ENCODE measurements at regions of chr17 and their contacts with region 1.

Region 1: GRCh38 chr17:48618256-48618897 is 3.3 kb upstream of the HOXB8 start:
- DNase-seq: peak; percentile 77
- H3K4me3 ChIP-seq: no peak overlapping the region
- H3K27ac ChIP-seq: no peak overlapping the region
- H3K4me1 ChIP-seq: peaks cover 4% of the 10 kb centered on the region
- H3K27me3 ChIP-seq: peaks cover 87% of the 10 kb centered on the region
- CTCF ChIP-seq: peak; percentile 87 to 92

Region 2: DNA sequence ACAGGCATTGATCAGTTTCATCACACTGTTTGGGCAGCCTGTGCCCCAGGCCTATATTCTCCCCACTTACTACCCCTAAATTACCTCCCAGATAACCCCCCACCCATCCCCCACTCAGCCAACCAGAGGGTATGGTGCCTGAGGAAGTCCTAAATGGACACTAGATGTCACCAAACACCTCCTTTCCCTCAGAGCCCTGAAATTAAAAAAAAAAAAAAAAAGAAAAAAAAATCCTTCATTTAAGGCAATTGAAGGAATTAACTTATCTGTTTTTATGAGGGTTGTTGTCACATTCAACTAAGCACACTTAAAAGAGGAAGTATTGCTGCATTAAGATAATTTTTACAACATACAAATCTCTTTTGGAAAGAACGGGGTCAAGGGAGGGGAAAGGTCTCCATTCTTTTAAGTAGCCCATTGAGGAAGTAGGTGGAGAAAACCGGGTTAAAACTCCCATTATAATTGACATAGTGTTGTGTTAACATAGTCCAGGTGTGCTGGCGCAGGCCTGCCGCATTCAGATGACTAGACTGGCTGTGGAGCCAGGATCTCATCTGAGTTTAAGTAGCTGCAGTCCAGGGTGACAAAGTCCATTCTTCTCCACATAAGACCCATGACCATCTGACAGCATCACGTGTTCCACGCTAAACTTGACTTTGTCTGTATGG is 464.6 kb before region 1 on chr17:
- CTCF ChIA-PET with region 1: no interaction called
- dilution Hi-C with region 1: no loop called
- in situ Hi-C with region 1: no loop called
- intact Hi-C with region 1: loop called (anchors 2 kb)
- DNase-seq: no peak
- H3K4me3 ChIP-seq: no peak overlapping the region
- H3K27ac ChIP-seq: no peak overlapping the region
- H3K4me1 ChIP-seq: no peaks in the 10 kb centered on the region
- H3K27me3 ChIP-seq: peaks cover 4% of the 10 kb centered on the region
- CTCF ChIP-seq: peak; percentile 32 to 53

Region 3: GRCh38 chr17:48228721-48229120 is 389.7 kb before region 1 on chr17:
- CTCF ChIA-PET with region 1: no interaction called
- dilution Hi-C with region 1: loop called (anchors 5 kb)
- in situ Hi-C with region 1: no loop called
- intact Hi-C with region 1: no loop called
- DNase-seq: no peak
- H3K4me3 ChIP-seq: no peak overlapping the region
- H3K27ac ChIP-seq: no peak overlapping the region
- H3K4me1 ChIP-seq: no peaks in the 10 kb centered on the region
- H3K27me3 ChIP-seq: no peaks in the 10 kb centered on the region
- CTCF ChIP-seq: no peak

Region 4: GRCh38 chr17:48259694-48260291 is 358.6 kb before region 1 on chr17:
- CTCF ChIA-PET with region 1: interaction called, 3 read pairs
- dilution Hi-C with region 1: no loop called
- in situ Hi-C with region 1: no loop called
- intact Hi-C with region 1: loop called (anchors 2 kb)
- DNase-seq: peak; percentile 30
- H3K4me3 ChIP-seq: no peak overlapping the region
- H3K27ac ChIP-seq: no peak overlapping the region
- H3K4me1 ChIP-seq: no peaks in the 10 kb centered on the region
- H3K27me3 ChIP-seq: no peaks in the 10 kb centered on the region
- CTCF ChIP-seq: peak; percentile 65 to 77

Region 5: DNA sequence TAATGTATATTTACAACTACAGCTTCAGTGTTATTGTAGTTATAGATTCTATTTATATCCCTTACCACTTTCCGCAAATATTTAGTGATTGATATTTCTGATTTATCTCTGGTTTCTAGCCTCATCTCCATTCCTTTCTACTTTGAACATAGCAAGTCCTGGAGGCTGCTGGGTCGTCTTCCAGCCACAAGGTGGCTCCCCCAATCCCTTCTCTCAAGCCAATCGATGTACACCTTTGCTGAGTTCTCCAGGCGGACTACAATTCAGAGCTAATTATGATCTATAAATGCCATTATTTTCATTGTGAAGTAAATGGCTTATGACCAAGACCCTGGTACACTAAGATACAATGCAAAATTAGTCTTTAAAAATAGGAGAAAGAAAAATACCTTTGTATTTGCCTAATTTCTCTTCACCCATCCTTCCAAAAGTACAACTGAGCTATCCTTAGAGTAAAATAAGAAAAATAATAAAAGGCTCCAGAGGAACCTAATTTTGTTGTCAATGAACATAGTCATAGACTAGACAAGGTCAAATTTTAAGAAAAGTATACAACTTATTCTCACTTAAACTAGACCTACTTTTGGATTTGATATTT is 310.5 kb before region 1 on chr17:
- CTCF ChIA-PET with region 1: no interaction called
- dilution Hi-C with region 1: no loop called
- in situ Hi-C with region 1: no loop called
- intact Hi-C with region 1: loop called (anchors 1 kb)
- DNase-seq: peak; percentile 37
- H3K4me3 ChIP-seq: no peak overlapping the region
- H3K27ac ChIP-seq: no peak overlapping the region
- H3K4me1 ChIP-seq: no peaks in the 10 kb centered on the region
- H3K27me3 ChIP-seq: peaks cover 20% of the 10 kb centered on the region
- CTCF ChIP-seq: peak; percentile 91 to 96

Region 6: DNA sequence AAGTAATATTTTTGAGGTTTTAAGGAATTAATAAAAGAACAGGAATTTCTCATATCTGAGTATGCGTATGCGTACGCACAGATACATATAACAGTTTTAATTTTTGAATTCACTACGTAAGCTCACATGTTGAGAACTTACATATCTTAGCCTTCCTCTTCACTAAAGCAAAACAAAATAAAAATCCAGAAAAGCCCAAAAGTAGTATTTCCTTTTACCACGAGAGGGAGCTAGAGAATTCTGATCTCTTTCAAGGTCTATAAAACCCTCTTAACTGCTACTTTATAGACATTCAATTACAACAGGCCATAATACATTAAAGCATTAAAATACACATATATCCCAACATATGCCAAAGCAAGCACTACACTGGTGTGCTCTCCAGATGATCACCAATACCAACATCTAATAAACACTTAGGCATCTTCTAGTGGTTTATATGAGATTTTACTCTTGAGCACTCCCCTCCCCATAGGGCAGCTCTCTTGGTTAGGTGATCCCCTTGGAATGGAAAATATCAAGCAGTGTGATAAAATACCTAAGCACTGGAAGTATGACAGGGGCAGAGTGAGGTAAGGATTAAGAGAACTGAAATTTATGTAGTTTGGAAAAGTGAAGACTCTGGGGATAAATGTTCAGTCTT is 282.4 kb before region 1 on chr17:
- CTCF ChIA-PET with region 1: no interaction called
- dilution Hi-C with region 1: no loop called
- in situ Hi-C with region 1: no loop called
- intact Hi-C with region 1: loop called (anchors 1 kb)
- DNase-seq: peak; percentile 53
- H3K4me3 ChIP-seq: no peak overlapping the region
- H3K27ac ChIP-seq: no peak overlapping the region
- H3K4me1 ChIP-seq: peaks cover 3% of the 10 kb centered on the region
- H3K27me3 ChIP-seq: peaks cover 13% of the 10 kb centered on the region
- CTCF ChIP-seq: peak; percentile 69 to 71

Region 7: GRCh38 chr17:48690655-48691054 is 72.3 kb after region 1 on chr17:
- CTCF ChIA-PET with region 1: no interaction called
- dilution Hi-C with region 1: no loop called
- in situ Hi-C with region 1: no loop called
- intact Hi-C with region 1: no loop called
- DNase-seq: no peak
- H3K4me3 ChIP-seq: no peak overlapping the region
- H3K27ac ChIP-seq: no peak overlapping the region
- H3K4me1 ChIP-seq: no peaks in the 10 kb centered on the region
- H3K27me3 ChIP-seq: no peaks in the 10 kb centered on the region
- CTCF ChIP-seq: no peak

Measured in mammary epithelial cell (primary cell).